Endothelial cell of umbilical vein (primary cell): ENCODE measurements at regions of chr20 and their contacts with region 1.

Region 1: DNA sequence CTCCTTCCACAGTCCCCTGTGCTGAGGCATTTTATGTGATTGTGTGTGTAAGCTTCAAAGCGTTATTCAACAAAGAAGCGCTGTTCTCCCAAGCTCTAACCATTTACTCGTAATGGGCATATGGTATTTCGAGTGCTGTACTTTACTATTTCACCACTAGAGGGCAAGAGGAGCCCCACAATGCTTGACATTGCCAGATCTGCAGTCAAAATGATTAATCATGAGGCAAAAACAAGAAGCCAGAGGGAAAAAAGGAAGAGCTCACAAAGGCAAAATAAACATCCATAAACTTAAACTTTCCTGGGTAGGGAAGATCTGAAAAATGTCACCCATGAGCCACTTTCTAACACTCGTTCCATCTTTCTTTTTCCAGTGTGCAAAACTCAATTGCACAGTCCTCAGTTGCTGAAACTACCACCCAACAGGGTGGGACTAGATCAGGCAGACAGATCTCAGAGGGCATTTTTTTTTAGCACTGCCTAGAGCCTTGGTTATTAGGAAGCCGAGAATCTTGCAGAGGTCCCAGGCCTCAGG is 215.0 kb upstream of the PLCB4 start:
- DNase-seq: peak; percentile 90
- H3K4me3 ChIP-seq: no peak overlapping the region
- H3K27ac ChIP-seq: no peak overlapping the region
- H3K4me1 ChIP-seq: peaks cover 13% of the 10 kb centered on the region
- H3K27me3 ChIP-seq: no peaks in the 10 kb centered on the region
- CTCF ChIP-seq: peak; percentile 68 to 73
- POLR2A ChIP-seq: no peak

Region 2: DNA sequence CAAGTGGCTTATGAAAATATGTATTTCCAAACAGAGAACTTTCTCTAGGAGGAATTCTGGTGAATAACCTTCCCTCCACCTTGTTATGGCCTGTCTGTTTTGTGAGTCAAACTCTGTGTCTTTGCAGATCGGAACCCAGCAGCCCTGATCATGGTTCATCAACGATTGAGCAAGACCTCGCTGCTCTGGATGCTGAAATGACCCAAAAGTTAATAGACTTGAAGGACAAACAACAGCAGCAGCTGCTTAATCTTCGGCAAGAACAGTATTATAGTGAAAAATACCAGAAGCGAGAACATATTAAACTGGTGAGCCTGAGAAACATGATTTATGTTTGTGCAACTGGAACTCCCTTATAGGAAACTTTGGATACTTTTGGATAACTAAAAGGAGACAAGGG is 79.5 kb before region 1 on chr20:
- CTCF ChIA-PET with region 1: no interaction called
- POLR2A ChIA-PET with region 1: no interaction called
- dilution Hi-C with region 1: no loop called
- intact Hi-C with region 1: no loop called
- DNase-seq: no peak
- H3K4me3 ChIP-seq: no peak overlapping the region
- H3K27ac ChIP-seq: no peak overlapping the region
- H3K4me1 ChIP-seq: no peaks in the 10 kb centered on the region
- H3K27me3 ChIP-seq: no peaks in the 10 kb centered on the region
- CTCF ChIP-seq: no peak
- POLR2A ChIP-seq: no peak

Region 3: GRCh38 chr20:8812817-8813216 is 41.1 kb before region 1 on chr20:
- CTCF ChIA-PET with region 1: interaction called, 24 read pairs
- POLR2A ChIA-PET with region 1: no interaction called
- dilution Hi-C with region 1: no loop called
- intact Hi-C with region 1: loop called (anchors 2 kb)
- DNase-seq: peak; percentile 86
- H3K4me3 ChIP-seq: no peak overlapping the region
- H3K27ac ChIP-seq: peak overlapping the region; percentile 49
- H3K4me1 ChIP-seq: peaks cover 12% of the 10 kb centered on the region
- H3K27me3 ChIP-seq: no peaks in the 10 kb centered on the region
- CTCF ChIP-seq: no peak
- POLR2A ChIP-seq: no peak

Region 4: DNA sequence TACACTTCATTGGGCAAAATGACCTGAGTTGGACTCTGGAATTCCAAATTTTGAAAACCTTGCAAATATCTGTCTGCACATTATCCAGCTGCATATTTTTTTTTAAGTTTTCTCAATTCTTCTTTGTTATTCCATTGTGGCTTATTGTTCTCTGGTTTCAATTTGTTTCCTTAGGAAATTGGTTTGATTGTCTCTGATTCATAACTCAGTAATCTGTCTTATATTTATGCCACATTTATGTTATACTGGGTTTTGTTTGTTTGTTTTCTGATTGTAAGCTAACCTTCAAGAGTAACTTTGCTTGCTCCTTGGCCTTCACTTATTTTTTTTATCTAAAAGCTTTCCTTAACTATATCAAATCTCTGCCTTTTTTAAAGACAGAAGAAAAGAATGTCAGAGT is 21.7 kb after region 1 on chr20:
- CTCF ChIA-PET with region 1: interaction called, 21 read pairs
- POLR2A ChIA-PET with region 1: no interaction called
- dilution Hi-C with region 1: no loop called
- intact Hi-C with region 1: no loop called
- DNase-seq: peak; percentile 64
- H3K4me3 ChIP-seq: no peak overlapping the region
- H3K27ac ChIP-seq: peak overlapping the region; percentile 34
- H3K4me1 ChIP-seq: peaks cover 13% of the 10 kb centered on the region
- H3K27me3 ChIP-seq: no peaks in the 10 kb centered on the region
- CTCF ChIP-seq: no peak
- POLR2A ChIP-seq: no peak

Region 5: DNA sequence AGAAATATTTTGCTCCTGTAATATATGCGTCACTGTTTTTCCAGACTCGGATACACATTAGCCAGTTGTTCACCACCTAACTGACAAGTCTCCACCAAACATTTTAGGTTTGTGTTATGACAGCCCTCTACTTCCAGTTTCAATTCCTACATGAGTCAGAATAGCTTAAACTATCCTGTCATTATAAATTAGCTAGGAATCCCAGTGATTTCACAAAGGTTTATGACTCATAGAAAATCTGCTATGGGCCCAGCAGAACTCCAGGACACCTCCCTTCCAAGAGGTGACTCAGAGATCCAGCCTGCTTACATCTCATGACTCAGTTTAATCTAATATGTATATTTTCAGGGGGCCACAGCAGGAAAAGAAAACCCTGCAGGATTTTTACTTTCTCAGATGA is 197.6 kb after region 1 on chr20:
- CTCF ChIA-PET with region 1: interaction called, 13 read pairs
- POLR2A ChIA-PET with region 1: no interaction called
- dilution Hi-C with region 1: no loop called
- intact Hi-C with region 1: no loop called
- DNase-seq: peak; percentile 93
- H3K4me3 ChIP-seq: no peak overlapping the region
- H3K27ac ChIP-seq: peak overlapping the region; percentile 73
- H3K4me1 ChIP-seq: peaks cover 13% of the 10 kb centered on the region
- H3K27me3 ChIP-seq: no peaks in the 10 kb centered on the region
- CTCF ChIP-seq: no peak
- POLR2A ChIP-seq: no peak

Region 6: DNA sequence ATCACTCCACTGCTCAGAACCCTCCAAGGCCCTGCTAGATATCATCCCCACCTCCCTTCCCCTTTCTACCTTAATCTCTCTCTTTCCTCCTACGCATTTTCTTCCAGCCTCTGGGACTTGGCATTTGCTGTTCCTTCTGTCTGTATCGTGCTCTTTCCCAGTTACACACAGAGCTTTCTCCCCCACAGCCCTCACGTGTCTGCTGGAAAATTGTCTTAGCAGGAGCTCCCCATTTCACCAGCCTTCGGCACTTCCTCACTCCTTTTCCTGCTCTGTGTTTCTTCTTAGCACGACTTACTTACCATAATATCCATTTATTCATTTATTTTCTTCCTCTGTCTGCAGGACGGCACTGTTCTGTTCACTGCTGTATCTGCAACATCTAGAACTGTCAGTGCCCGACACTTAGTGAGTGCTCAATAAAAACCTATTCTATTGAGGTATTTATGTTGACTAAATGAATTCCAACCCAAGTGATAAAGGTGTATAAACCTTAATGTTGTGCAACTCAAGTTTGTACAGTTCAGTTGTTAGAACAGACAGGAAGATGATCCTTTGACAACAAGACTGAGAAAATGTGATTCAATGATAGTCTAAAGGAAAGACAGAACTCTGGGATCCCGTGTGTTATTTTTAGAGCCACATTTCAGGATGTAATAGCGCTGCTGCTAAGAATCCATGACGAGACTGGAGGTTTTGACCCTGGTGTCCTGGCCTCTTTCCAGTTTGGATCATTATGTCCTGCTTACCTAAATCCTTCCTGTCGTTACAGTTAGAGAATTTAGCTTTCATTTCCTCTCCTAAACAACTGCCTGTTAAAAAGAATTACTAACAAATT is 490.4 kb after region 1 on chr20:
- CTCF ChIA-PET with region 1: interaction called, 20 read pairs
- POLR2A ChIA-PET with region 1: no interaction called
- dilution Hi-C with region 1: no loop called
- intact Hi-C with region 1: no loop called
- DNase-seq: peak; percentile 64
- H3K4me3 ChIP-seq: no peak overlapping the region
- H3K27ac ChIP-seq: no peak overlapping the region
- H3K4me1 ChIP-seq: peaks cover 19% of the 10 kb centered on the region
- H3K27me3 ChIP-seq: no peaks in the 10 kb centered on the region
- CTCF ChIP-seq: no peak
- POLR2A ChIP-seq: no peak

Region 7: DNA sequence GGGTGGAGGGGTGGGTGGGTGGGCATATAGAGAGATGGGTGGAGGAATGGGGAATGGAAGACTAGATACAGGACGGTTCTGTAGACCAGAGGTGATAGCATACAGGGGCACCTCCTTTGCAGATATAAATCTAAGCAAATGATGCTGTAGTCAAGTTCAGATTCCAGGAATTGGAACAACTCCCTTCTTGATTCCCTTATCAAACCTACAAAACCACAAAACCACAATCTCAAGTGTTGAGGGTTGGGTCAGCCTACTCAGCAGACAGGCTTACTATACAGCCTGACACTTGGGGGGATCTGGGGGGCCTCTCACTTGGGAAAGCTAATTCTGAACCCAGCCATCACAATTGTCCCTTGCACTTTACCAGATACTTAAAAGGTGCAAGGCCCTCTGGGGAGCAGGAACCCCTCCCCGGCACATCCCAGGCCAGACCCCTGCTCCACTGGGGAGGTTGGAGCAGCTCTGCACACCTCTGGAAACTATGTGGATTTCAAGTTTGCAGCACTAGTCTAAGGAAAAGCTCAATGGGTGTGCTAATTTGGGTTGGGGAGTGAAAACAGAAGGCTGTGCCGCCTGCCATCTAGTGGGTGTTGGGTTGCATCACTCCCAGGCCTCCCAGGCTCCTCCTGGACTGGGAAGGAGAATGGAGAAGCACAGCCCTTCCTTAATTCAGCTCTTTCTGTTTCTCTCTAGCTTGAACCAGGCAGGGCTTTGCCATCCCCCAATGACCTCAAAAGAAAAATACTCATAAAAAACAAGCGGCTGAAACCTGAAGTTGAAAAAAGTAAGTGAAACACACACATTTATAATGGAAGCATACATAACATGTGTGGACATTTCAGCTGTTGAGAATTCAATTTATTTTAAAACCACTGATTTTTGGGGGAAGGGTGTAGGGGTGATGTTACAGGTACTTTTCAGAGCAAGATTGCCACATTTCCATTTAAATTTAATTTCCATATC is 539.3 kb after region 1 on chr20:
- CTCF ChIA-PET with region 1: interaction called, 28 read pairs
- POLR2A ChIA-PET with region 1: no interaction called
- dilution Hi-C with region 1: no loop called
- intact Hi-C with region 1: loop called (anchors 1 kb)
- DNase-seq: peak; percentile 37
- H3K4me3 ChIP-seq: no peak overlapping the region
- H3K27ac ChIP-seq: no peak overlapping the region
- H3K4me1 ChIP-seq: no peaks in the 10 kb centered on the region
- H3K27me3 ChIP-seq: no peaks in the 10 kb centered on the region
- CTCF ChIP-seq: peak; percentile 54 to 80
- POLR2A ChIP-seq: no peak